ENCODE measurements at regions of chr2 and their contacts with region 1.

Region 1: DNA sequence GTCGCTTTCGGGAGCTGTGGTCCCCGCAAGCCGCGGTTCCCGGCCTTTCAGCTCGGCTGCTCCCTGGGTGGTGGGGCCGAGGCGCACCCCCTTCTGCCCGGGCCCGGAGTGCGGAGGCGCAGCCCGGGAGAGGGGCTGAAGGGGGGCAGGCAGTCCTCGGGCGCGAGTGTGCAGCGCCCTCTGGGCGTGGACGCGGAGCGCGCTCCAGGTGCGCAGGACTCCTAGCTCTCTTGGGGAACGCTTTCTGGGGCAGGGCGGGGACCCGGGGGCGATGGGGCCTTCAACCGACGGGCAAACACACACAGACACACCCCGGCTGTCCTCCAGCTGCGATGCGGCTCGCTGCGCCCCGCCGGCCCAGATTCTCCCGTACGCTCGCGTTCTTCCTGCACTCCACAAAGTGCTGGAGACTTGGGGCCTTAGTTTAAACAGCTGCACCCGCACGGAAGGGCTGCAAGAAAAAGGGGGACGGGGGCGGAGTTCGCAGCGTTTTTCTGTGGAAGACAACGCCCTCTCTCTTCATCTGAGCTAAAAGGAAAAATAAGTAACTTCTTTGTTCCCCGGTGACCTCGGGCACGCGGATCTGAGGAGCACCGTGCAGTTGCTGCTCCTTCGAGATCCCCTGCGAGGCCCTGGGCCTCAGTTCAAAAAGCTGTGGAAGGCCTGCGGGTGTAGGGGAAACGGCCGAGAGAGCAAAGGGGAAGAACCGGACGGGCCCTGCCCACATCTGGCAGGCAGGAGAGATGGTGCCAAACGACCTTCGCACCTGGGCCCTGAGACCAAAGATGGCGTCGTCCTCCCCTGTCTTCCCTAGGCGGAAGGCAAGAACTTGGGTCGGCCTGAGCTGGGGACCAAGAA is 593 bp upstream of the SDC1 start:
- DNase-seq: peak; percentile 50
- ATAC-seq: peak; percentile 50
- H3K4me3 ChIP-seq: peak overlapping the region; percentile 62
- H3K27ac ChIP-seq: no peak overlapping the region
- H3K4me1 ChIP-seq: peaks cover 21% of the 10 kb centered on the region
- H3K27me3 ChIP-seq: no peaks in the 10 kb centered on the region
- CTCF ChIP-seq: peak; percentile 63
- POLR2A ChIP-seq: no peak
- RAD21 ChIP-seq: peak; percentile 65

Region 2: GRCh38 chr2:20106746-20107145 is 118.8 kb before region 1 on chr2:
- CTCF ChIA-PET with region 1: interaction called, 10 read pairs
- POLR2A ChIA-PET with region 1: no interaction called
- dilution Hi-C with region 1: no loop called
- in situ Hi-C with region 1: no loop called
- intact Hi-C with region 1: loop called (anchors 2 kb)
- DNase-seq: no peak
- ATAC-seq: peak; percentile 58; the same call in 1 of the 2 replicates
- H3K4me3 ChIP-seq: peak overlapping the region; percentile 31; the same call in 1 of the 2 replicates
- H3K27ac ChIP-seq: no peak overlapping the region; the same call in 1 of the 2 replicates
- H3K4me1 ChIP-seq: peaks cover 4% of the 10 kb centered on the region
- H3K27me3 ChIP-seq: no peaks in the 10 kb centered on the region
- CTCF ChIP-seq: peak; percentile 45
- POLR2A ChIP-seq: no peak
- RAD21 ChIP-seq: peak; percentile 42

Region 3: GRCh38 chr2:20135631-20136050 is 89.9 kb before region 1 on chr2:
- CTCF ChIA-PET with region 1: interaction called, 10 read pairs
- POLR2A ChIA-PET with region 1: no interaction called
- dilution Hi-C with region 1: no loop called
- in situ Hi-C with region 1: no loop called
- intact Hi-C with region 1: loop called (anchors 1 kb)
- DNase-seq: peak; percentile 61
- ATAC-seq: peak; percentile 85
- H3K4me3 ChIP-seq: no peak overlapping the region
- H3K27ac ChIP-seq: no peak overlapping the region
- H3K4me1 ChIP-seq: peaks cover 8% of the 10 kb centered on the region
- H3K27me3 ChIP-seq: peaks cover 13% of the 10 kb centered on the region
- CTCF ChIP-seq: peak; percentile 81
- POLR2A ChIP-seq: no peak
- RAD21 ChIP-seq: peak; percentile 78

Region 4: GRCh38 chr2:20165680-20166509 is 59.6 kb before region 1 on chr2:
- CTCF ChIA-PET with region 1: no interaction called
- POLR2A ChIA-PET with region 1: no interaction called
- dilution Hi-C with region 1: no loop called
- in situ Hi-C with region 1: no loop called
- intact Hi-C with region 1: loop called (anchors 5 kb)
- DNase-seq: no peak
- ATAC-seq: no peak
- H3K4me3 ChIP-seq: no peak overlapping the region
- H3K27ac ChIP-seq: no peak overlapping the region; the same call in 1 of the 2 replicates
- H3K4me1 ChIP-seq: peaks cover 13% of the 10 kb centered on the region
- H3K27me3 ChIP-seq: no peaks in the 10 kb centered on the region
- CTCF ChIP-seq: no peak
- POLR2A ChIP-seq: no peak
- RAD21 ChIP-seq: no peak

Region 5: GRCh38 chr2:20378792-20379519 is 153.4 kb after region 1 on chr2:
- CTCF ChIA-PET with region 1: no interaction called
- POLR2A ChIA-PET with region 1: no interaction called
- dilution Hi-C with region 1: no loop called
- in situ Hi-C with region 1: no loop called
- intact Hi-C with region 1: no loop called
- DNase-seq: peak; percentile 86
- ATAC-seq: peak; percentile 97
- H3K4me3 ChIP-seq: no peak overlapping the region
- H3K27ac ChIP-seq: peak overlapping the region; percentile 46; the same call in 1 of the 2 replicates
- H3K4me1 ChIP-seq: peaks cover 19% of the 10 kb centered on the region
- H3K27me3 ChIP-seq: no peaks in the 10 kb centered on the region
- CTCF ChIP-seq: peak; percentile 92
- POLR2A ChIP-seq: 0 out of 2 replicates have a peak, but pooled peaks have one; percentile 36
- RAD21 ChIP-seq: peak; percentile 88

Measured in IMR-90 (cell line).